ENCODE measurements at regions of chr19 and their contacts with region 1.

Region 1: DNA sequence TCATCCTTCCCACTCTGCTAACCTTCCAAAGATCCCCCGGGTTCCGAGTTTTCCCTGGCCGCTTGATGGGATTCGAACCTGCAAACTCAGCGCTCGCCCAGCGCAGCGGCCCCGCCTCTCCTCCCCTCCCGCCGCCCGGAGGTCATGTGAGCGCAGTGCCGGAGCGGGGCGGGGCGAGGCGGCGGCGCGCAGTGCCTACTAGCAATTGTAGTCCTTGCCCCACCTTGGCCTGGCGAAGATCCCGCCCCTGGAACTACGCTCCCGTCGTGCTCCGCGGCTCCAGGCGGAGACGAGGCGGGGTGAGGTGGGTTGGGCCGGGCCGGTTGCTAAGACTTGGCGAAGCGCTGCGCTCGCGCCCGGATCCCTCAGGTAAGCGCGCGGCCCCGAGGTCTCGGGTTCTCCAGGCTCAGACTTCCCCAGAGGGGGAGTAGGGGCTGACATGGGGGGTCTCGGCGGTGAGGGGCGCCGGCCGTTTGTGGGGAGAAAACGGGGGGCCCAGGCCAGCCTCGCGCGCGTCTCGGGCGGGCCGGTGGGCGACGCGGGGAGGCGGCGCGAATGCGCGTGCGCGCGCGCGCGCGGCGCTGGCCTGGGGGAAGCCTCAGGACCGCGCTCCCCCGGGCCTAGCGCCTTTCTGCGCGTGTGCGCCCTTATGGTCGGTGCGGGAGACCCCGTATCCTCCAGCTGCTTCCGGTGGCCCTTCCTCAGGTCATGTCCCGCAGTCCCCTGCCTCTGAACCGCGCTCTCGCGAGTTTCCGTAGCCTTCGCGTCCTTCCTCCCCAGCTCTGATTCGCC is at the starts of genes ADAT3 and SCAMP4:
- DNase-seq: peak; percentile 92 to 96
- H3K4me3 ChIP-seq: peak within 1 kb of the TSS; percentile 59
- H3K27ac ChIP-seq: peak within 1 kb of the TSS; percentile 96
- H3K4me1 ChIP-seq: peaks cover 19% of the 10 kb centered on the region
- H3K27me3 ChIP-seq: no peaks in the 10 kb centered on the region
- CTCF ChIP-seq: no peak
- total RNA-seq, gene ADAT3: 7.8 and 10.1 TPM in 2 replicates
- total RNA-seq, gene SCAMP4: 61.7 and 69.8 TPM in 2 replicates

Region 2: DNA sequence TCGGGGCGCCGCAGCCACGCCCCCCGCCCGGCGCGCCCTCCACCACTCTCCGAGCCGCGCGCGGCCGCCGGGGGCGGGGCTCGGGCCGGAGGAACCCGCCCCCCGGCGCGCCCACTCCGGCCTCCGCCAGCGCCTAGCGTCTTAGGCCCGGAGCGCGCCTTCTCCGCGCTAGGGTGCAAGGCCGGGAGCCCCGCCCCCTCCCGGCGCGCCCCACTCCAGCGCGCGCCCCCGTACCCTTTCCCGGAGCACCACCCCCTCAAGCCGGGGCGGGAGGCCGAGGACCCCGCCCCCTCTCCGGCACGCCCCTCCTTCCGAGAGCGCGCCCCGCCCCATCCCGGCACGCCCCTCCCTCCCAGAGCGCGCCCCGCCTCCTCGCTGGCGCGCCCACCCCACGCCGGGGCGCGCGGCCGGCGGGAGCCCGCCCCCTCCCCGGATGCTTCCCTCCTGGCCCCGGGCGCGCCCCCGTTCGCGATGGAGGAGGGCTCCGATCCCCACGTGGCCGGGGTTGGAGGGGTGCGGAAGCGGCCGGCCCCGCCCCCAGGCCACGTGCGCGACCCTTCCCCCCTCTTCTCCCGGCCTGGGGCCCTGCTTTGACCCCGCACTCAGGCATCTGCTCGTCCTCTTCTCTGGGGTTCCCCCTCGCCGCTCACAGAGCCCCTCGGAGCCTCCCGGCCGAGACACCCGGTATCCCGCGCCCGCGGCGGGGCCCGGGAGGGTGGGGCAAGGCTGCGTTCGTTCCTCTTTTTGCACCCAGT is 41.4 kb before region 1 on chr19:
- CTCF ChIA-PET with region 1: no interaction called
- POLR2A ChIA-PET with region 1: no interaction called
- intact Hi-C with region 1: loop called (anchors 2 kb)
- DNase-seq: peak; percentile 70 to 90
- H3K4me3 ChIP-seq: peak overlapping the region; percentile 78
- H3K27ac ChIP-seq: peak overlapping the region; percentile 83
- H3K4me1 ChIP-seq: peaks cover 10% of the 10 kb centered on the region; the same call in 1 of the 2 replicates
- H3K27me3 ChIP-seq: no peaks in the 10 kb centered on the region
- CTCF ChIP-seq: no peak

Region 3: GRCh38 chr19:2016041-2016807 is 111.0 kb after region 1 on chr19:
- CTCF ChIA-PET with region 1: interaction called, 13 read pairs
- POLR2A ChIA-PET with region 1: no interaction called
- intact Hi-C with region 1: no loop called
- DNase-seq: peak; percentile 44 to 57
- H3K4me3 ChIP-seq: no peak overlapping the region
- H3K27ac ChIP-seq: no peak overlapping the region
- H3K4me1 ChIP-seq: no peaks in the 10 kb centered on the region; the same call in 1 of the 2 replicates
- H3K27me3 ChIP-seq: no peaks in the 10 kb centered on the region
- CTCF ChIP-seq: no peak

Region 4: GRCh38 chr19:2385053-2385721 is 479.9 kb after region 1 on chr19:
- CTCF ChIA-PET with region 1: no interaction called
- POLR2A ChIA-PET with region 1: no interaction called
- intact Hi-C with region 1: no loop called
- DNase-seq: peak; percentile 54 to 81
- H3K4me3 ChIP-seq: peak overlapping the region; percentile 14; the same call in 1 of the 2 replicates
- H3K27ac ChIP-seq: no peak overlapping the region
- H3K4me1 ChIP-seq: peaks cover 4% of the 10 kb centered on the region; the same call in 1 of the 2 replicates
- H3K27me3 ChIP-seq: no peaks in the 10 kb centered on the region
- CTCF ChIP-seq: no peak

Measured in PC-9 (cell line).